ENCODE measurements at regions of chr11 and their contacts with region 1.

Region 1: GRCh38 chr11:64742889-64743590 is 902 bp downstream of the RASGRP2 start:
- DNase-seq: peak; percentile 56 to 91 (median 77)
- ATAC-seq: peak; percentile 13
- H3K4me3 ChIP-seq: peak overlapping the region; percentile 78 to 89
- H3K4me3 Mint-ChIP-seq: peak overlapping the region; percentile 99
- H3K27ac ChIP-seq: peak overlapping the region; percentile 78 to 88
- H3K27ac Mint-ChIP-seq: no peak overlapping the region
- H3K4me1 ChIP-seq: peaks cover 31% of the 10 kb centered on the region
- H3K4me1 Mint-ChIP-seq: peaks cover 48% of the 10 kb centered on the region
- H3K27me3 ChIP-seq: no peaks in the 10 kb centered on the region
- H3K27me3 Mint-ChIP-seq: no peaks in the 10 kb centered on the region
- CTCF ChIP-seq: peak; percentile 90

Region 2: DNA sequence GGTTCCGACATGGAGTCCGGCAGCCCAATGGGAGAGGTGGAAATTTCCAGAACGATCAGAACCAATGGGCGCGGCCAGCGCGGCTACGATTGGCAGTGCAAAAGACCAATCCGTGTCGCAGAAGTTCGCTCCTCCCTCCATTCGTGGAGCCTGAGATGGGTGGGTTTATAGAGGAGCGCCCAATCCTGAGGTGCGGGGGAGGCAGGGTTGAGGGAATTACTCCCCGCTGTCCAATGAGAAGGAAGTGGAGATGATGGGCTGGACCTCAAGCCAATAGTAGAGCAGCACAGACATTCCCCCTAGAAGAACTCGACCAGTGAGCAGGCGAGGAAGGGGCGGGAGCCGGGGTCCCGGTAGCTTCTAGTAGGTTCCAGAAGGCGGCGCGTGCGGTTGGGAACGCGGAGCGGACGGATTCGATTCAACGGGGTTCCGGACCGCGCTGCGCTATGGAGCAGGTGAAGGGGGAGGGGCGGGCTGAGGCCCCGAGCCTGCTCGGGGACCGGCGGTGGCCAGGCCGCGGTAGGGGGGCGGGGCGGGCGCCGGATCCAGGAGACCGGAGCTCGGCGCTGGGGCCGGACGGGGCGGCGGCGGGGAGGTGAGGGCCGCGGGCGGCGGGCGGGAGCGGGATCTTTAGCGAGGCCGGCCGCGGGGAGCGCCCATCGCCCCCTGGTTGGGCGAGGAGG is 557.1 kb before region 1 on chr11 and contains the start of gene STIP1:
- CTCF ChIA-PET with region 1: no interaction called
- POLR2A ChIA-PET with region 1: no interaction called
- intact Hi-C with region 1: loop called in 1 of 2 experiments (anchors 10 kb)
- DNase-seq: peak; percentile 96 to 100 (median 98)
- ATAC-seq: peak; percentile 87
- H3K4me3 ChIP-seq: peak within 1 kb of the TSS; percentile 79 to 88
- H3K4me3 Mint-ChIP-seq: peak within 1 kb of the TSS; percentile 96
- H3K27ac ChIP-seq: peak within 1 kb of the TSS; percentile 57 to 85
- H3K27ac Mint-ChIP-seq: peak within 1 kb of the TSS; percentile 97
- H3K4me1 ChIP-seq: peaks cover 39% of the 10 kb centered on the region
- H3K4me1 Mint-ChIP-seq: peaks cover 43% of the 10 kb centered on the region
- H3K27me3 ChIP-seq: no peaks in the 10 kb centered on the region
- H3K27me3 Mint-ChIP-seq: no peaks in the 10 kb centered on the region
- CTCF ChIP-seq: peak; percentile 36
- total RNA-seq, gene STIP1: 37.0 to 37.7 TPM

Region 3: GRCh38 chr11:64629796-64630562 is 113.1 kb before region 1 on chr11:
- CTCF ChIA-PET with region 1: no interaction called
- POLR2A ChIA-PET with region 1: no interaction called
- intact Hi-C with region 1: no loop called
- DNase-seq: no peak
- ATAC-seq: no peak
- H3K4me3 ChIP-seq: no peak overlapping the region
- H3K4me3 Mint-ChIP-seq: no peak overlapping the region
- H3K27ac ChIP-seq: no peak overlapping the region
- H3K27ac Mint-ChIP-seq: no peak overlapping the region
- H3K4me1 ChIP-seq: peaks cover 13% of the 10 kb centered on the region
- H3K4me1 Mint-ChIP-seq: peaks cover 11% of the 10 kb centered on the region
- H3K27me3 ChIP-seq: no peaks in the 10 kb centered on the region
- H3K27me3 Mint-ChIP-seq: peaks cover 7% of the 10 kb centered on the region
- CTCF ChIP-seq: no peak

Region 4: DNA sequence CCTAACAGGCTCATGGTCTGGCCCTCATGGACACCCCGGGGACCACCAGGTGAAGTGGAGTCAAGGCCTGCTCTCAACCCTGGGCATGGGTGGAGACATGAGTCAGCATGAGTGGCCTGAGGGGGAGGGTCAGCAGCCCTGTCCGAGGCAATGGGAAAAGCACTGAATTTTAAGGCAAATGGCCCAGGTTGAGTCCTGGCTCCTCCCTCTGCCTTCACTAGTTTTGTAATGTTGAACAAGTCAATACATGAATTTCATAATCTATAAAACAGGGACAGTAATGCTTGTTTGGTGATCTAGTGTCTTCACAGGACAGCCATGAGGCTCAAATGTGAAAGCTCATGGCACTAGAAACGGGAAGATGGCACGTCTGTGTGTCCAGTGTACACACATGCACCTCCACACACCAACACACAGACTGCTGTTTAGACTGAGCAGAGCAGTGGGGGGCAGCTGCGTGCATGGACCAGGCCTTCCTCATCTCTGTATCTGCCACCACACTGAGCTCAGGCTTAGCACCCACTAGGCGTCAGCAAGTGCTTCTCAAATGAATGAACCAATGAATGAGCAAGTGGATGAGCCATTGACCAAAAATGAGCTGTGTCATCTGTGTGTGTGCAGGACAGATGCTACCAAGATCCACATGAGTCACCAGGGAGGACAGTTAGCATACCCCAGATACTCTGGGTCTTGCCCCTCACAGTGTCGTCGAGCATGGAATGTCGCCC is 83.5 kb before region 1 on chr11:
- CTCF ChIA-PET with region 1: no interaction called
- POLR2A ChIA-PET with region 1: no interaction called
- intact Hi-C with region 1: no loop called
- DNase-seq: no peak
- ATAC-seq: no peak
- H3K4me3 ChIP-seq: no peak overlapping the region
- H3K4me3 Mint-ChIP-seq: no peak overlapping the region
- H3K27ac ChIP-seq: no peak overlapping the region
- H3K27ac Mint-ChIP-seq: no peak overlapping the region
- H3K4me1 ChIP-seq: no peaks in the 10 kb centered on the region
- H3K4me1 Mint-ChIP-seq: no peaks in the 10 kb centered on the region
- H3K27me3 ChIP-seq: no peaks in the 10 kb centered on the region
- H3K27me3 Mint-ChIP-seq: no peaks in the 10 kb centered on the region
- CTCF ChIP-seq: no peak

Region 5: GRCh38 chr11:64688534-64688982 is 54.5 kb before region 1 on chr11:
- CTCF ChIA-PET with region 1: interaction called, 19 read pairs
- POLR2A ChIA-PET with region 1: interaction called, 7 read pairs
- intact Hi-C with region 1: loop called (anchors 1 kb)
- DNase-seq: peak; percentile 80 to 97 (median 93)
- ATAC-seq: peak; percentile 99
- H3K4me3 ChIP-seq: peak overlapping the region; percentile 21 to 44
- H3K4me3 Mint-ChIP-seq: peak overlapping the region; percentile 64
- H3K27ac ChIP-seq: peak overlapping the region in 1 of 2 experiments; percentile 23
- H3K27ac Mint-ChIP-seq: peak overlapping the region; percentile 63
- H3K4me1 ChIP-seq: peaks cover 18% of the 10 kb centered on the region
- H3K4me1 Mint-ChIP-seq: peaks cover 21% of the 10 kb centered on the region
- H3K27me3 ChIP-seq: no peaks in the 10 kb centered on the region
- H3K27me3 Mint-ChIP-seq: peaks cover 8% of the 10 kb centered on the region
- CTCF ChIP-seq: peak; percentile 94

Region 6: DNA sequence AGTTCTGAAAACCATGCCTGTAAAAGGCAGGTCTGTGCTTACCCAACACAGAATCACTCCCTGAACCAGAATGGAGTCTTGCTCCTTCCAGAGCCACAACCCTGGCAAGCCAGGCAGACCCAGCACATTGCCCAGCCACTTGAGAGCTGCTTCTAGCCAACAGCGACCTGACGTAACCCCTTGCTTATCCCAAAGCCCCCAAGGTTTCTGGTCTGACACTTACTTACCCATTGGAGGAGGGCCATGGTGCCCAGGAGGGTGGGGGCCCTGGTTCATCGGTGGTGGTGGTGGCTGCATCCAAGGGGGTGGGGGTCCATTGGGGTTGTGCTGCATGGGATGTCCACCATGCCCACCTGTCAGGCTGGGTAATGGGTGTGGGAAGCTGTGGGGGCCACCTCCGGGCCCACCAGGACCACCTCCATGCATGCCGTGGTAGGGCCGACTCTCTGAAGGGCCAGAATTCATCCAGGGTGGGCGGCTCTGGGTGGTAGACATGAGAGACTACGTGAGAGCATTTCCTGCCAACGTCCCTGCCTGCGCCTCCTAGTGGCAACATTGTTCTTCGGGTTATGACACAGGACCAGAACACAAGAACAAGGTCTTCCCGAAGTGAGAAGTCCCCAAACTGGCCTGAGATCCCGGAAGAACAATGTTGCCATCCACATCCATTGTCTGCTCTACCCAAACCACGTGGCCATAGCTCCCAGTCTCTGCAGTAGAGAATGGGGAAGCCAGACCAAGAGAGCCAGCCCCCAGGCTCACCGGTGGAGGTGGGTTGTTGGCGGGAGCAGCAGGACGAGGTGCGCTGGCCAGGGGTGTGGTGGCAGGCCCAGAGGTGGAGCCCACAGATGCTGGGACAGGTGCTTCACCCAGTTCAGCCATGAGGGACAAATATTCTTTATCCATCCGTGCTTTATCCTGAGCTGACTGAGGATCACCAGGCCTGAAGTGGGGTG is 24.6 kb after region 1 on chr11:
- CTCF ChIA-PET with region 1: interaction called, 474 read pairs
- POLR2A ChIA-PET with region 1: interaction called, 342 read pairs
- intact Hi-C with region 1: loop called (anchors 1 kb)
- DNase-seq: peak; percentile 65 to 91 (median 86)
- ATAC-seq: peak; percentile 25
- H3K4me3 ChIP-seq: peak overlapping the region in 1 of 2 experiments; percentile 33
- H3K4me3 Mint-ChIP-seq: peak overlapping the region; percentile 58
- H3K27ac ChIP-seq: peak overlapping the region; percentile 11 to 44
- H3K27ac Mint-ChIP-seq: peak overlapping the region; percentile 94
- H3K4me1 ChIP-seq: peaks cover 96% of the 10 kb centered on the region
- H3K4me1 Mint-ChIP-seq: peaks cover 88% of the 10 kb centered on the region
- H3K27me3 ChIP-seq: no peaks in the 10 kb centered on the region
- H3K27me3 Mint-ChIP-seq: no peaks in the 10 kb centered on the region
- CTCF ChIP-seq: peak; percentile 81

Region 7: DNA sequence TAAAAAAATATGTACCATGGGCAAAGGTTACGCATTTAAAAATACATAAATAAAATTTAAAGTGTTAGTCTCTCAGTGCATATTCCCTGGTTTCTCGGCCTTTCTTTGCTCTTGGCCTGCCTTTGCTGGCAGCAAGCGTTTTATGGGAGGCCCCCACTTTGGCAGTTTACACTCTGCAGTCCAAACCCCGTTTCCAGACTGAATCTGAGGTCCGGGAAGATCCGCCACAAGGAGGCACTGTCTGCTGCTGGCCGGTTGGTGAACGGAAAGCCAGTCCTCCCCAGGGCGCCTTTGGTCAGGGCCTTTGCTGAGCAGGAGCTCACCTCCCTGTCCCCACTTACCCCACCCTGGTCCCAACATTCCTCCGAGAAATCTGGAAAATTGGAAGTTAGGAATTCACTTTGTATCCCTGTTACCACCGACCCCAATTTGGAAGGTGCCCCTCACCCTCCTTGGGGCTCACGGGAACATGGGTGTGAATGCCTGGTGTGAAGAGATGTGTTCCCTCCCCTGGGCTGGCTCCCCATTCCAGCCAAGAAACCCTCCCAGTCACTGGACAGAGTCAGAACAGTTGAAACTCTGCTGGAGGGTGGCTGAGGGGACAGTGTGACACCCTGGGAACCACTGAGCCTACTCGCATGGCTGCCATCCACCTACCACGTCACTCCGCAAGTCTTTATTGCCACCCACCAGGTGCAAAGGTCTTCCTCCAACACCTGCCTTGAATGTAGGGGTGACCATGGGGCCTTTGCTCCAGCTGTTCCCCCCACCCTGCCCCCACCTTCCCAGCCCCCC is 44.7 kb after region 1 on chr11:
- CTCF ChIA-PET with region 1: interaction called, 17 read pairs
- POLR2A ChIA-PET with region 1: interaction called, 10 read pairs
- intact Hi-C with region 1: no loop called
- DNase-seq: peak in 7 of 9 experiments; percentile 42 to 75 (median 70)
- ATAC-seq: peak; percentile 84
- H3K4me3 ChIP-seq: no peak overlapping the region
- H3K4me3 Mint-ChIP-seq: no peak overlapping the region
- H3K27ac ChIP-seq: no peak overlapping the region
- H3K27ac Mint-ChIP-seq: peak overlapping the region; percentile 13
- H3K4me1 ChIP-seq: no peaks in the 10 kb centered on the region
- H3K4me1 Mint-ChIP-seq: peaks cover 8% of the 10 kb centered on the region
- H3K27me3 ChIP-seq: no peaks in the 10 kb centered on the region
- H3K27me3 Mint-ChIP-seq: no peaks in the 10 kb centered on the region
- CTCF ChIP-seq: peak; percentile 77

Region 8: DNA sequence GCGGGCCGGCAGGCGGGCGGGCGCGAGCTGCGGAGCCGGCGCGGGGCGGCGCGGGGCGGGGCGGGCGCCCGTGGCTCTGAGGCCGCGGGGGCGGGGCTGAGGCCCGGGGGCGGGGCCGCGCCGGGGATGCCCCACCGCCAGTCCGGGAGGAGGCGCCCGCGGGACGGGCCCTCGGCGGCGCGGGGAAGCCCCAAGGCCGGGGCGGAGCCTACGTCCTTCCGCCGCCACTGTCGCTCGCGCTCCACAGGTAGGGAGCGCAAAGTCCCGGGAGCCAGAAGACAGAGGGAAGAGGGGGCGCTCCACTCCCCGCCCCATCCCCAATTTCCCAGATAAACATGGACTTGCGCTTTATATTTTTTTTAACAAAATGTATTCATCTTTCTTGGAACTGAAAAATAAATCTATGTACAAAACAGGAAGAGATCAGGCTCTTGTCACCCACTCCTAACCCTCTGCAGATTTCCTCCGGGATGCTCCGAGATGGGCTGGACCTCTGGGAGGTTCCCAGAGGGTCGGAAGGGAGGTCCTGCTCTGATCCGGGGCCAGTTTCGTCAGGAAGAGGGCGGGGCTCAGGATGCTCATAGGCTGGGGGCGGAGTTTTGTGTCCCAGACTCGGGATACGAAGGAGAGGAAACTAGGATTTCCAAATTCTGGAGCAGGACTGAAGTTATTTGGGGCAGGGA is 60.3 kb after region 1 on chr11 and contains the start of gene MAP4K2:
- CTCF ChIA-PET with region 1: interaction called, 9 read pairs
- POLR2A ChIA-PET with region 1: interaction called, 12 read pairs
- intact Hi-C with region 1: loop called (anchors 2 kb)
- DNase-seq: peak; percentile 62 to 94 (median 83)
- ATAC-seq: peak; percentile 92
- H3K4me3 ChIP-seq: peak within 1 kb of the TSS; percentile 70 to 79
- H3K4me3 Mint-ChIP-seq: peak within 1 kb of the TSS; percentile 83
- H3K27ac ChIP-seq: peak within 1 kb of the TSS; percentile 65 to 93
- H3K27ac Mint-ChIP-seq: peak within 1 kb of the TSS; percentile 90
- H3K4me1 ChIP-seq: peaks cover 30% of the 10 kb centered on the region
- H3K4me1 Mint-ChIP-seq: peaks cover 37% of the 10 kb centered on the region
- H3K27me3 ChIP-seq: no peaks in the 10 kb centered on the region
- H3K27me3 Mint-ChIP-seq: no peaks in the 10 kb centered on the region
- CTCF ChIP-seq: no peak
- total RNA-seq, gene MAP4K2: 56.2 to 60.1 TPM

Region 9: DNA sequence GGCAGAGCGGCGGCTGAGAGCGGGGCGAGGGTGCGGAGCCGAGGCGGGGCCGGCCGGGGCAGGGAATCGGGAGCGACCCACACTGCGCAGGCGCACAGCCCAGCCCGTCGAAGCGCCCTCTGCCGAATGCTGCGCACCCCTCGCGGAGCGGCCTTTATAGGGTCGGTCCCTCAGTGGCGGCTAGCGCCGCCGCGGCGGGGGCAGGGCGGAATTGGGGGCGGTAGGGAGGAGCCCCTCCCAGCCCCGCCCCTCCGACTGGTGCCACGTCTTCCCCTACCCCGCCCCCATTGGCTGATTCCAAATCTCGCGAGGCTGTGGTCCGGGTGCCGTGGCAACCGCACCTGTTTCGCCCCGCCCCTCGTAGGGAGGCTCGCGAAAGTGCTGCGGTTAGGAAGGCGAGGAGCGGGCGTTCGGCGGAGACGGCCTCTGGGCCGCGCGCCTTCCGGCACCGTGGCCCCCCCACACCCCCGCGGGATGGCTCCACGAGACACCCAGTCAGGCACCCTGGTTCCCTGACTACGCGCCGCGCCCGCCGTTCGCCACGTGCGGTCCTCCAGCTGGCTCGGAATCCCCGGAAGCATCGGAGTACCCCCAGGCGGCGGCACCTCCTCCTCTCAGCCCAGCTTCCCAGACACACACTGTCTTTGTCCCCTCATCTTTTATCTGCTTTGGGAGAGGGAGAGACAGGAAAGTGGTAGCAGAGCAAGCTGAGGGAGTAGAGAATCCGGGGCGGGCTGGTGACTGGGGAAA is 135.6 kb after region 1 on chr11 and contains the start of gene EHD1:
- CTCF ChIA-PET with region 1: no interaction called
- POLR2A ChIA-PET with region 1: interaction called, 7 read pairs
- intact Hi-C with region 1: loop called in 1 of 2 experiments (anchors 1 kb)
- DNase-seq: peak; percentile 99 to 100 (median 100)
- ATAC-seq: peak; percentile 82
- H3K4me3 ChIP-seq: peak within 1 kb of the TSS; percentile 87 to 100
- H3K4me3 Mint-ChIP-seq: peak within 1 kb of the TSS; percentile 95
- H3K27ac ChIP-seq: peak within 1 kb of the TSS; percentile 91 to 96
- H3K27ac Mint-ChIP-seq: peak within 1 kb of the TSS; percentile 97
- H3K4me1 ChIP-seq: peaks cover 57% of the 10 kb centered on the region
- H3K4me1 Mint-ChIP-seq: peaks cover 63% of the 10 kb centered on the region
- H3K27me3 ChIP-seq: no peaks in the 10 kb centered on the region
- H3K27me3 Mint-ChIP-seq: no peaks in the 10 kb centered on the region
- CTCF ChIP-seq: peak; percentile 29
- total RNA-seq, gene EHD1: 187 to 212 TPM

Measured in CD8-positive, alpha-beta T cell (primary cell).